B cell (primary cell): ENCODE measurements at regions of chr17 and their contacts with region 1.

Region 1: DNA sequence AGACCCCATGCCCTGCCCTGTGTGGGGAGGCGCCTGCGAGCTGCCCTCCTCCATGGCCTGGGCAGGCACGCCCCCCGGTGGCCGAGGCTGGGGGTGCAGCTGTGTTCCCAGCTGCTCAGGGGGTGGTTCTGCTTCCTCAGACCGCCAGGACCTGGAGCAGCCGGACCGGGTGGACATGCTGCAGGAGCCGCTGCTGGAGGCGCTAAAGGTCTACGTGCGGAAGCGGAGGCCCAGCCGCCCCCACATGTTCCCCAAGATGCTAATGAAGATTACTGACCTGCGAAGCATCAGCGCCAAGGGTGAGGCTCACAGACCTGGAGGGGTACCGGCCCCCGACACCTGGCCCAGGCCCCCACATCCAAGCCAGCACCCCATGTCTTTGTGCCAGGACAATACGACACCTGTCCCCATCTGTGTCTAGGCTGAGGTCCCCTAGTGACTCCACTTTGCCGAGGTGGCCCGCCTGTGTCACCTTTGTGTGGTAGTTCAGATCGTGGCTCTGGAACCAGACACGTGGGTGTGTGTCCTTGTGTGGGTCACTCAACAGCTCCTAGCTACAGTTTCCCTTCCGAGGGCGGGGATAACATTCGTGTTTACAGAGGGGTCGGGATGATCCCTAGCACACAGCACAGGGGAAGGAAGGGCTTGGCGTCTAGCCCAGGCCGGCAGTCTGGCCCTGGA is 9.3 kb downstream of the GJD3 start:
- DNase-seq: peak; percentile 86
- ATAC-seq: peak; percentile 72
- H3K4me3 ChIP-seq: no peak overlapping the region
- H3K4me3 Mint-ChIP-seq: no peak overlapping the region
- H3K27ac ChIP-seq: no peak overlapping the region
- H3K27ac Mint-ChIP-seq: peak overlapping the region; percentile 50
- H3K4me1 ChIP-seq: peaks cover 22 to 37% of the 10 kb centered on the region in 2 donors
- H3K4me1 Mint-ChIP-seq: peaks cover 36% of the 10 kb centered on the region
- H3K27me3 ChIP-seq: peaks cover 0 to 7% (median 0%) of the 10 kb centered on the region in 4 experiments
- H3K27me3 Mint-ChIP-seq: no peaks in the 10 kb centered on the region
- CTCF ChIP-seq: peak; percentile 98

Region 2: DNA sequence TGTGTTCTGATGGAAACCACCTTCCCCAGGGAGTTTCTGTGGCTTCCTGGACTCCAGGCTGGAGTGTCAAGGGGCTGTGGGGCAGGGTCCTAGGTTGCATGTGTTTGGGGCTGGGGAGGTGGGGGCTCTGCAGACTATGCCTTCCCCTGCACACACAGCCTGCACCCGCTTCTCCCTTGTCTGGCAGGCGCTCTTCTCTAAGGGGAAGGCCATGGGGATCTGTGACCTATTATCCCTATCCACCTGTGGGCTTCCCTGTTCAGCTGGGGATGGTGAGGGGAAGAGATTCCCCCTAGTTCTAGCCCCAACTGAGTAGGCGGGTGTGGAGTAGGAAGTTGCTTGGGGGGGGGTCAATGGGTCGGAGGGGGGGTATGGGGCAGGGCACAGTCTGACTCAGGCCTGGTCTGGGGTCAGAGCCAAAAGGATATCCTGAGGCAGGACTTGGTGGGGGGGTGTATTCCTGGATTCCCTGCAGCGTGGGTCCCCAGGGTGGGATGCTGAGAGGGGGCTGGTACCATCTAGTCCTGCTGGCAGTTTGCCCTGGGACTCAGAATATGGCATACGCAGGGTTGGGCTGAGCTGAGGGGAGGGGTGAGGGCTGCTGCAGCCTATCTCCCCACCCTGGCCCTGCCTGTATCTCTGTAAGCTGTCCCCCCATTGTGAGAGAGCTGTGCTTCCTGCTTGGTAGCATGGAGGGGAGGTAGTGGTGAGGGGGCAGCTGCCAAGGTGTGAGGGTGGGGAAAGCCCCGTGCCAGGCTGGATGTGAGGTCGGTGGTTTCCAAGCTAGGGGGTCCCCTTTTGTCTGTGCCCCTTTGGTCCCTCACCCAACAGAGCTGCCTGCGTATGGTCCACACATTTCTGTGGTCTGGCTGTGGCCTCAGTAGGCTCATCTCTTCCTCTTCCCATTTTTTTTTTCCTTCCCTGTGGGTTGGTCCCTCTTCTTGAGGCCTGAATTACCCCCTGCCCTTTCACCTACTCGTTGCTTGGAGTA is 31.6 kb before region 1 on chr17:
- CTCF ChIA-PET with region 1: interaction called, 56 read pairs
- POLR2A ChIA-PET with region 1: interaction called, 6 read pairs
- intact Hi-C with region 1: loop called (anchors 1 kb)
- DNase-seq: peak; percentile 94
- ATAC-seq: peak; percentile 32
- H3K4me3 ChIP-seq: peak overlapping the region; percentile 48 to 94 (median 67)
- H3K4me3 Mint-ChIP-seq: peak overlapping the region; percentile 97
- H3K27ac ChIP-seq: peak overlapping the region; percentile 96
- H3K27ac Mint-ChIP-seq: peak overlapping the region; percentile 100
- H3K4me1 ChIP-seq: peaks cover 92 to 100% of the 10 kb centered on the region in 2 donors
- H3K4me1 Mint-ChIP-seq: peaks cover 95% of the 10 kb centered on the region
- H3K27me3 ChIP-seq: no peaks in the 10 kb centered on the region
- H3K27me3 Mint-ChIP-seq: no peaks in the 10 kb centered on the region
- CTCF ChIP-seq: no peak

Region 3: DNA sequence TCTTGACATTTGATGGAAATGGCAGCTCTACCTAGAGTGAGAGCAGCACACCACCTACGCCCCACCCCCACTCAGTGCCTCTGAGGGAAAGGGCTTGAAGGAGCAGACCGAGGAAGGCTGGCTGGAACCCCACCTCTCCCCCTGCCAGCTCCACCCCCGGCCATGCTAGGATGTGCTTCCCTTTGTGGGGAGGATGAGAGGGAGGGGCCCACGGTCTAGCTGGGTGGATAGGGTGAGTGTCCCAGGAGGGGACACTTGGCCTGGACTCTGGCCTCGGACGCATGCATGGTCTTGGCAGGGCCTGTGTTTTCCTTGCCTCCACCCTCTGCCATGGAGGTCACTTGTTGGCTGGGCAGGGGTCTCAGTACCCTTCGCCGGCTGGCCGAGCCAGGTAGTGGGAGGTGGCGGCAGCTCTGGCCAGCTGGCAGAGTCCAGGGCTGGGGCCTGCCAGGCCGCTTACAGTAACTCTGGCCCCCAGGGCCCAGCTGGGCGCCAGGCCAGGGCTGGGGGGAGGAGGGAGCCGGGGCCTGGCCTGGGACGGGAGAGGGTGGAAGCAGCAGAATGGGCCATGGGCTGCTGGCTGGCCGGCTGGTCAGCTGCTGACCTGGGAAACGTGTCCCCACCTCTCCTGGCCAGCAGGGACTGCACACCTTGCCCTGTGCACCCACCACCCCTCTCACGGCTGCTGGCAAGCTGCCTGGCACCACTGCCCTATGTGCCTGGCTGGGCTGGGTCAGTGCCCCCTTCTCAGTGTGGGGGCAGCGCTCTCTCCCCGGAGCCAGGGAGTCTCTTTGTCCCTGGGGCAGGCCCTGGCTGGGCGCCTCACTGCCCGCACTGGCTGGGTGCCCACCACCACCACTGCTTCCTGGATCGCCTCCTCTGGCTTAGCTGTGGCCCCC is 23.3 kb before region 1 on chr17:
- CTCF ChIA-PET with region 1: interaction called, 56 read pairs
- POLR2A ChIA-PET with region 1: interaction called, 6 read pairs
- intact Hi-C with region 1: no loop called
- DNase-seq: no peak
- ATAC-seq: no peak
- H3K4me3 ChIP-seq: no peak overlapping the region
- H3K4me3 Mint-ChIP-seq: peak overlapping the region; percentile 40
- H3K27ac ChIP-seq: no peak overlapping the region
- H3K27ac Mint-ChIP-seq: peak overlapping the region; percentile 50
- H3K4me1 ChIP-seq: peaks cover 67 to 86% of the 10 kb centered on the region in 2 donors
- H3K4me1 Mint-ChIP-seq: peaks cover 72% of the 10 kb centered on the region
- H3K27me3 ChIP-seq: no peaks in the 10 kb centered on the region
- H3K27me3 Mint-ChIP-seq: no peaks in the 10 kb centered on the region
- CTCF ChIP-seq: no peak

Region 4: DNA sequence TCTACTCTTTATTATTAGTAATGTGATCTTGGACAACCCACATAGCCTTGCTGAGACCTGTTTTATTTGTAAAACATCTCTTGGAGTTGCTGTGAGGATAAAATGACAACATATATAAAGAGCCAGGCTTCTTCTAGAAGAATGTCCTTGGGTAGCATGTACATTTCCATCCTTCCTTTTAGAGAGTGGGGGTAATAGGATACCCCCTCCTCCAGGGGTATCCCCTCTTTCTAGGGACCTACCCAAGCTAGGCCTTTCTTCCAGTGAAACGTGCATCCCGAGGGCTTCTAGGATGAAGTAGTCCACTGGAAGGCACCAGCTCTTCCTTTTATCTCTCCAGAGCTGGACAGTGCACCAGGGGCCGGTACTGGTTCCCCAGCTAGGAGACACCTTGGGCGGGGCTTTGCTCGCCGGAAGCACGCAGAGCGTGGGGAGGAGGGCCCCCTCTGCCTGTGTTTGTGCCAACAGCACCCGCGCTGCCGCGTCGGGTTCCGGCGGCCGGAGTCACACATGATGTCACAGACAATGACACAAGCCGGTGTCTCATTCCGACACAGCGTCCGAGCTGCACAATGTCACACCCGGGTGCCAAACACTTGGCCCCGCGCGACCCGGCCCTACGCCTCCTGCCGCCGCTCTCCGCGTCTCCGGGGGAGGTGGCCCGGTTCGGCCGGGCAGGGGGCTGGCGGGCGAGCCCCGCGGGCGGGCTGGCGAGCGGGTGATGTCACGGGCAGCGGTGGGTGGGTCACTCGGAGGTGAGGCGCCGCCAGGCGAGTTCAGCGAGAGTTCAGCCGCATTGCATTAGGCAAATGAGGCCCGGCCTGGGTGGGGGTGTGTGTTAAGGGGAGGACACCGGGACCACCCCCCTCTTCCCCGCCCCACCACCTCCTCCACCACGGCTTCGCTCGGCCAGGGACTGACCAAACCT is 14.1 kb before region 1 on chr17:
- CTCF ChIA-PET with region 1: interaction called, 39 read pairs
- POLR2A ChIA-PET with region 1: interaction called, 6 read pairs
- intact Hi-C with region 1: loop called (anchors 1 kb)
- DNase-seq: peak; percentile 95
- ATAC-seq: peak; percentile 76
- H3K4me3 ChIP-seq: peak overlapping the region; percentile 51 to 84 (median 71)
- H3K4me3 Mint-ChIP-seq: peak overlapping the region; percentile 91
- H3K27ac ChIP-seq: peak overlapping the region; percentile 67 to 88
- H3K27ac Mint-ChIP-seq: peak overlapping the region; percentile 92
- H3K4me1 ChIP-seq: peaks cover 70 to 85% of the 10 kb centered on the region in 2 donors
- H3K4me1 Mint-ChIP-seq: peaks cover 74% of the 10 kb centered on the region
- H3K27me3 ChIP-seq: no peaks in the 10 kb centered on the region
- H3K27me3 Mint-ChIP-seq: no peaks in the 10 kb centered on the region
- CTCF ChIP-seq: no peak